PC-3 (cell line): ENCODE measurements at regions of chr2 and their contacts with region 1.

Region 1: GRCh38 chr2:169397697-169398096 is 35.4 kb upstream of the LRP2 start:
- DNase-seq: peak; percentile 36
- ATAC-seq: no peak
- H3K4me3 ChIP-seq: no peak overlapping the region
- H3K27ac ChIP-seq: no peak overlapping the region
- H3K4me1 ChIP-seq: no peaks in the 10 kb centered on the region
- H3K27me3 ChIP-seq: peaks cover 49% of the 10 kb centered on the region
- CTCF ChIP-seq: peak; percentile 61

Region 2: GRCh38 chr2:168097431-168097830 is 1300.3 kb before region 1 on chr2:
- CTCF ChIA-PET with region 1: no interaction called
- POLR2A ChIA-PET with region 1: no interaction called
- intact Hi-C with region 1: no loop called
- DNase-seq: no peak
- ATAC-seq: no peak
- H3K4me3 ChIP-seq: no peak overlapping the region
- H3K27ac ChIP-seq: no peak overlapping the region
- H3K4me1 ChIP-seq: no peaks in the 10 kb centered on the region
- H3K27me3 ChIP-seq: no peaks in the 10 kb centered on the region
- CTCF ChIP-seq: no peak

Region 3: GRCh38 chr2:168948621-168949212 is 449.0 kb before region 1 on chr2:
- CTCF ChIA-PET with region 1: no interaction called
- POLR2A ChIA-PET with region 1: no interaction called
- intact Hi-C with region 1: loop called (anchors 5 kb)
- DNase-seq: peak; percentile 60
- ATAC-seq: peak; percentile 67
- H3K4me3 ChIP-seq: no peak overlapping the region
- H3K27ac ChIP-seq: no peak overlapping the region
- H3K4me1 ChIP-seq: peaks cover 8% of the 10 kb centered on the region
- H3K27me3 ChIP-seq: no peaks in the 10 kb centered on the region
- CTCF ChIP-seq: peak; percentile 84